ENCODE measurements at regions of chr9 and their contacts with region 1.

Region 1: GRCh38 chr9:129835021-129835871 is at the starts of genes C9orf78 and USP20:
- DNase-seq: peak; percentile 92 to 94
- ATAC-seq: peak; percentile 98 to 99
- H3K4me3 ChIP-seq: peak within 1 kb of the TSS; percentile 94 to 100 (median 98)
- H3K27ac ChIP-seq: peak within 1 kb of the TSS; percentile 78 to 95 (median 90)
- H3K4me1 ChIP-seq: peaks cover 24 to 28% of the 10 kb centered on the region in 2 donors
- H3K27me3 ChIP-seq: no peaks in the 10 kb centered on the region
- CTCF ChIP-seq: no peak
- POLR2A ChIP-seq: peak; percentile 91 to 97
- total RNA-seq, gene C9orf78: 82.3 to 108 (median 83.9) TPM
- total RNA-seq, gene USP20: 13.4 to 25.4 (median 18.6) TPM

Region 2: DNA sequence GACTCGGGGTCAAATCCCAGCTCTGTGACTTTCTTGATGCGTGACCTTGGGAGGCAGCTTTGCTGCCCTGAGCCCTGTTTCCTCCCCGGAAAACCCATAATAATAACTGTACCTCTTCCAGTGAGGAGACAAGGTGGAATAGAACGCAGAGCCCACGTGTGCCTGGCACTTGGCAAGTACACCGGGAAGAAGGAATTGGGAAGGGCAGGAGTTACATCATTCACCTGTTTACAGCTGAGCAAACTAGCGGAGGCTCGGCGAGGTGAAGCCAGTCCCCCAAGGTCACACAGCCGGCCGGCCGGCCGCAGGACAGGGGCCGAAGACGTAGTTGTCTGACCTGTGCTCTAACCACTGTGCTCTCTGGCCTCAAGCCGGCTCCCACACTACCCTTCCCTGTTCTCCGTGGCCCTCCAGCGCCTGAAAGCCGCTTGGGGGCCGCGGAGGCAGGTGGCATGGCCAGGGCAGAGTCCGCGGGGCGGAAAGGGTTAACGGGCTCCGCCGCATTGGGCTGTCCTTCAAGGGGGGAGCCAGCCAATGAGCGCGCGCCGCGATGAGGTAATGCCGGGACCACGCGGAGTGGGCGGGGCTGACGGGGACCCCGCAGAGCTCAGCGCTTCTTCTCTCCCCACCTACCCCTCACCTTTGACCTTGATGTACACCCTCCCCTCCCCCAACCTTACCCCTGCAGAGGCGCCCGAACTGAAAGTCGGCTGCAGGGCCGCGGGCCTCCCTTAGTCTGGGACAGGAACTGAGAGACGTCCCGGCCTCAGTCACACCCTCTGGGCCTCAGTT is 339.5 kb before region 1 on chr9:
- in situ Hi-C with region 1: no loop called
- intact Hi-C with region 1: no loop called
- DNase-seq: peak; percentile 87 to 92
- ATAC-seq: peak; percentile 74 to 76
- H3K4me3 ChIP-seq: peak overlapping the region; percentile 68 to 88 (median 73)
- H3K27ac ChIP-seq: peak overlapping the region; percentile 93 to 97 (median 94)
- H3K4me1 ChIP-seq: peaks cover 22 to 24% of the 10 kb centered on the region in 2 donors
- H3K27me3 ChIP-seq: no peaks in the 10 kb centered on the region
- CTCF ChIP-seq: no peak
- POLR2A ChIP-seq: no peak

Region 3: GRCh38 chr9:129783516-129784361 is 51.5 kb before region 1 on chr9:
- in situ Hi-C with region 1: no loop called
- intact Hi-C with region 1: no loop called
- DNase-seq: peak; percentile 33 to 48
- ATAC-seq: peak; percentile 81 to 89
- H3K4me3 ChIP-seq: no peak overlapping the region
- H3K27ac ChIP-seq: no peak overlapping the region
- H3K4me1 ChIP-seq: no peaks in the 10 kb centered on the region
- H3K27me3 ChIP-seq: peaks cover 0 to 6% (median 5%) of the 10 kb centered on the region in 3 donors
- CTCF ChIP-seq: peak; percentile 76 to 89 (median 85)
- POLR2A ChIP-seq: no peak

Region 4: GRCh38 chr9:129802851-129803675 is 32.2 kb before region 1 on chr9 and contains the start of gene TOR1B:
- in situ Hi-C with region 1: no loop called
- intact Hi-C with region 1: loop called (anchors 5 kb)
- DNase-seq: peak; percentile 84 to 89
- ATAC-seq: peak; percentile 91 to 96
- H3K4me3 ChIP-seq: peak within 1 kb of the TSS; percentile 78 to 99 (median 89)
- H3K27ac ChIP-seq: peak within 1 kb of the TSS; percentile 82 to 90 (median 86)
- H3K4me1 ChIP-seq: peaks cover 8 to 10% of the 10 kb centered on the region in 2 donors
- H3K27me3 ChIP-seq: no peaks in the 10 kb centered on the region
- CTCF ChIP-seq: peak in 1 of 5 experiments; percentile 12
- POLR2A ChIP-seq: peak; percentile 63 to 79
- total RNA-seq, gene TOR1B: 15.9 to 22.6 (median 21.2) TPM

Region 5: DNA sequence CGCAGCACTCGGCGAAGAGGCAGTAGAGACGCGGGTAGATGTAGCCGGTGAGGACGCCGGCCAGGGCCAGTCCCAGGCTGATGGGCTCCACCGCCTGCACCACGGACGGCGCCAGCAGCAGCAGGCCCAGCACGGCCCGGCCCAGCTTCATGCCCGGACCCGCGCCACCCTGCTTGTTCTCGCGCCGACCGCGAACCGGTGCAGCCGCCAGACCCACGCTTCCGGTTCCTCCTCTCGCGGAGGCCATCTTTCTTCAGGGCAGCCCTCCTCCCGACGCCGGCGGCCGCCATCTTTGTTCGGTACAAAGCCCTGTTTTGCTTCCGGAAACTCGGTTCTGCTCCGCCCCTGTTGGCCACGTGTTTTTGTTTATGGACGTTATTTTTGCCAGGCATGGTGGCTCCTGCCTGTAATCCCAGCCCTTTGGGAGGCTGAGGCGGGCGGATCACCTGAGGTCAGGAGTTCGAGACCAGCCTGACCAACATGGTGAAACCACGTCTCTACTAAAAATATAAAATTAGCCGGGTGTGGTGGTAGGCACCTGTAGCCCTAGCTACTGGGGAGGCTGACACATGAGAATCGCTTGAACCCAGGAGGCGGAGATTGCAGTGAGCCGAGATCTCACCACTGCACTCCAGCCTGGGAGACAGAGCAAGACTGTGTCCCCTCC is 11.2 kb before region 1 on chr9 and contains the start of gene TOR1A:
- in situ Hi-C with region 1: no loop called
- intact Hi-C with region 1: loop called (anchors 1 kb)
- DNase-seq: peak; percentile 95 to 96
- ATAC-seq: peak; percentile 99
- H3K4me3 ChIP-seq: peak within 1 kb of the TSS; percentile 75 to 88 (median 78)
- H3K27ac ChIP-seq: peak within 1 kb of the TSS; percentile 68 to 86 (median 78)
- H3K4me1 ChIP-seq: peaks cover 0 to 8% of the 10 kb centered on the region in 2 donors
- H3K27me3 ChIP-seq: no peaks in the 10 kb centered on the region
- CTCF ChIP-seq: no peak
- POLR2A ChIP-seq: peak in 1 of 2 donors; percentile 25
- total RNA-seq, gene TOR1A: 18.1 to 31.9 (median 24.9) TPM

Region 6: DNA sequence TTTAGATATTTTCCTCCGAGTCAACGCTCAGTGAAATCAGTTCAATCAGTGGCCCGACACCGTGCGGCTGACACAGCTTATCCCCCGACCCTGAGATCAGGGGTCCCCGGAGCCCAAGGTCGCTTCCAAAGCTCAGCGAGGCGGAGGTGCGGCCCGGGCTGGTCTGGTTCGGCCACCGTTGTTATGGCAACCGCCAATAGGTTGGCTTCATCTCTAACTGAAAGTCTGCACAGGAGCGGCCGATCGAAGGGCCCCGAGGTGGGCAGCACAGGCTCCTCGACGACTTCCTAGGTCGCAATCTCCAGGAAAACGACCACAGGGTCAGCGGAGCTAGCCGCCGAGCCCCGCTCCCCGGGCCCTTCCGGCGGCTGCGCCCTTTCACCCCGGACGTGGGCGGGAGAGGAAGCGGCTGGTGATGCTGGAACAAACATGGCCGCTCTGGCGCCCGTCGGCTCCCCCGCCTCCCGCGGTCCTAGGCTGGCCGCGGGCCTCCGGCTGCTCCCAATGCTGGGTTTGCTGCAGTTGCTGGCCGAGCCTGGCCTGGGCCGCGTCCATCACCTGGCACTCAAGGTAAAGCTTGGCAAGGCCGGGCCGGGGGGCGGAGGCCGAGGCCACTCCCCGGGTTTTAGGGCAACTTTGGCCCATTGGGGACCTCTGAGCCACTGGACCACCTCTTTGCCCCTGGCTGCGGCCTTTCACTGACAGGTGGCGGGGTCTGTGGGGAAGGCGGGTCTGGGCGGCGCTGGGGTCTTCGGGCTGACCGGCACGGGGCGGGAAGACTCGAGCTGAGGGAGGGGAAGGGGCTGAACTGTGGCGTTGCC is 218.5 kb after region 1 on chr9 and contains the start of gene GPR107:
- in situ Hi-C with region 1: no loop called
- intact Hi-C with region 1: loop called (anchors 1 kb)
- DNase-seq: peak; percentile 55 to 61
- ATAC-seq: peak; percentile 92 to 97
- H3K4me3 ChIP-seq: peak within 1 kb of the TSS; percentile 84 to 100 (median 97)
- H3K27ac ChIP-seq: peak within 1 kb of the TSS; percentile 86 to 93 (median 91)
- H3K4me1 ChIP-seq: peaks cover 24 to 25% of the 10 kb centered on the region in 2 donors
- H3K27me3 ChIP-seq: no peaks in the 10 kb centered on the region
- CTCF ChIP-seq: no peak
- POLR2A ChIP-seq: peak; percentile 76 to 78
- total RNA-seq, gene GPR107: 13.5 to 20.7 (median 17.5) TPM